ENCODE measurements at regions of chr5 and their contacts with region 1.

Region 1: GRCh38 chr5:172714491-172715421 is 56.2 kb downstream of the DUSP1 start:
- DNase-seq: peak; percentile 69
- H3K4me3 ChIP-seq: no peak overlapping the region
- H3K27ac ChIP-seq: no peak overlapping the region
- H3K4me1 ChIP-seq: peaks cover 3% of the 10 kb centered on the region
- H3K27me3 ChIP-seq: no peaks in the 10 kb centered on the region
- CTCF ChIP-seq: peak; percentile 74

Region 2: GRCh38 chr5:172764849-172765765 is 50.4 kb after region 1 on chr5:
- CTCF ChIA-PET with region 1: interaction called, 6 read pairs
- POLR2A ChIA-PET with region 1: no interaction called
- intact Hi-C with region 1: loop called (anchors 2 kb)
- DNase-seq: peak; percentile 98
- H3K4me3 ChIP-seq: peak overlapping the region; percentile 56
- H3K27ac ChIP-seq: peak overlapping the region; percentile 93
- H3K4me1 ChIP-seq: peaks cover 35% of the 10 kb centered on the region
- H3K27me3 ChIP-seq: no peaks in the 10 kb centered on the region
- CTCF ChIP-seq: no peak

Region 3: GRCh38 chr5:172770675-172771438 is 56.1 kb after region 1 on chr5 and contains the start of gene DUSP1:
- CTCF ChIA-PET with region 1: interaction called, 8 read pairs
- POLR2A ChIA-PET with region 1: interaction called, 4 read pairs
- intact Hi-C with region 1: loop called (anchors 1 kb)
- DNase-seq: peak; percentile 94
- H3K4me3 ChIP-seq: peak within 1 kb of the TSS; percentile 91
- H3K27ac ChIP-seq: peak within 1 kb of the TSS; percentile 99
- H3K4me1 ChIP-seq: peaks cover 42% of the 10 kb centered on the region
- H3K27me3 ChIP-seq: no peaks in the 10 kb centered on the region
- CTCF ChIP-seq: peak; percentile 30; the same call in 1 of the 2 replicates
- total RNA-seq, gene DUSP1: 11.3 and 13.1 TPM in 2 replicates

Region 4: DNA sequence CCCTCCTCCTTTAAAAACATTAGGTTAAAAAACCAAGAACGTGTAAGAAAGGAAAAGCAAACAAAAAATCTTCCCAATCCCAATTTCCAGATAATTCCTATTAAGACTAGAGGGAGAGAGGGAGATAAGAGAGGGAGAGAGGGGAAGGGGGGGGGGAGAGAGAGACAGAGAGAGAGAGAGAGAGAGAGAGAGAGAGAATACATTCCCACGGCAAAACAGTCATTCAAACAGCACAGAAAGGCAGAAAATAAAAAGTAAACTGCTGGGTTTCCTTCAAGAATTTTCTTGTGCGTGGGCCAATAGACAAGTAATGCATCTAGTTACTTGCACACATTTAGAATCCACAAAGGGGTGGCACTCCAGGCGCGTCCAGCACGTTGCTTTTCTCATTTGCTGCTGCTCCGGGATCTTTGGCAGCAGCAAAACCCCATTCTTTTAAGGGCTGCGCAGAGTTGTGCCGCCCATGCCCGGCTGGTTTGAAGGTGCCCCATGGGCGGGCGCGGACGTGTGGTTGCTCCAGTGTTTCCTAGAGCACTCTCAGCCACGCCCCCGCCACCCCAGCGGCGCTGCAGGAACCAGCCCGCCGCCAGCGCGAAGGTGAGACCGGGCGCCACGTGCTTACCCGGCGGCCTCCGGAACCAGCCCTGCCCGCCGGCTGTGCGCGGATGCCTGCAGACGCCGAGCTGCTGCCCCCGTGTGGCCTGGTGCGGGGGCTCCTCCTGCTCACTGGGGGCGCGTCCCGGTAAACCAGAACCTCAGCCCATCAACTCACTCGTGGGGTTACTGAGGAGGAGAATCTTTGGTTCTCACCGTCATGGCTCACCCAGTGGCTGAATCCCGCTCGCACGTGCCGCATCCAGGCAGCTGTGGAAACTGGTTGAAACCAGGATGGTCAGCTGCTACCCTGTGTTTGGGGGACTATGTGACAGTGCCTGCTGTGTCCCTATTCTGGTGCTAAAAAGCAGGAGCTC is 568.8 kb after region 1 on chr5:
- CTCF ChIA-PET with region 1: no interaction called
- POLR2A ChIA-PET with region 1: no interaction called
- intact Hi-C with region 1: loop called (anchors 5 kb)
- DNase-seq: peak; percentile 80
- H3K4me3 ChIP-seq: peak overlapping the region; percentile 17
- H3K27ac ChIP-seq: no peak overlapping the region
- H3K4me1 ChIP-seq: no peaks in the 10 kb centered on the region
- H3K27me3 ChIP-seq: no peaks in the 10 kb centered on the region
- CTCF ChIP-seq: peak; percentile 75